AG04449 (cell line): ENCODE measurements at regions of chr12 and their contacts with region 1.

Region 1: GRCh38 chr12:47686645-47687240 is 19.1 kb downstream of the RPAP3 start:
- DNase-seq: peak; percentile 7
- H3K4me3 ChIP-seq: no peak overlapping the region
- CTCF ChIP-seq: peak; percentile 63

Region 2: GRCh38 chr12:47307680-47308399 is 378.9 kb before region 1 on chr12:
- CTCF ChIA-PET with region 1: interaction called, 16 read pairs
- POLR2A ChIA-PET with region 1: no interaction called
- DNase-seq: no peak
- H3K4me3 ChIP-seq: no peak overlapping the region
- CTCF ChIP-seq: peak; percentile 54

Region 3: DNA sequence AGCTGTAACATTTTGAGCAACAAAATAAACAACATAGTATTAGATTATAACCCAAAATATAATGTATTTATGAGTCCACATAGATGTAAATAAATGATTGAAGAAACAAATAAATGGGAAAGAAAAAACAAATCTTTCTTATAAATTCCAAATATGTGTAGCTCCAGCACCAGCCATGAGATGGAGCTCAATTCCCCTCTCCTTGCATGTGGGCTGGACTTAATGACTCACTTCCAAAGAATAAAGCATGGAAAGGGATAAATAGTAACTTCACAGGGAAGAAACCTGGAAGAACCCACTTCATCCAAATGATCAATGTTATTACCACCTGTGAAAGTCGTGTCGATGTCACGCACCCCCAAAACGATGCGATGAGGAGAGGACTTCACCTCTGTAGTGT is 139.7 kb before region 1 on chr12:
- CTCF ChIA-PET with region 1: interaction called, 10 read pairs
- POLR2A ChIA-PET with region 1: no interaction called
- DNase-seq: peak; percentile 9
- H3K4me3 ChIP-seq: no peak overlapping the region
- CTCF ChIP-seq: peak; percentile 49

Region 4: DNA sequence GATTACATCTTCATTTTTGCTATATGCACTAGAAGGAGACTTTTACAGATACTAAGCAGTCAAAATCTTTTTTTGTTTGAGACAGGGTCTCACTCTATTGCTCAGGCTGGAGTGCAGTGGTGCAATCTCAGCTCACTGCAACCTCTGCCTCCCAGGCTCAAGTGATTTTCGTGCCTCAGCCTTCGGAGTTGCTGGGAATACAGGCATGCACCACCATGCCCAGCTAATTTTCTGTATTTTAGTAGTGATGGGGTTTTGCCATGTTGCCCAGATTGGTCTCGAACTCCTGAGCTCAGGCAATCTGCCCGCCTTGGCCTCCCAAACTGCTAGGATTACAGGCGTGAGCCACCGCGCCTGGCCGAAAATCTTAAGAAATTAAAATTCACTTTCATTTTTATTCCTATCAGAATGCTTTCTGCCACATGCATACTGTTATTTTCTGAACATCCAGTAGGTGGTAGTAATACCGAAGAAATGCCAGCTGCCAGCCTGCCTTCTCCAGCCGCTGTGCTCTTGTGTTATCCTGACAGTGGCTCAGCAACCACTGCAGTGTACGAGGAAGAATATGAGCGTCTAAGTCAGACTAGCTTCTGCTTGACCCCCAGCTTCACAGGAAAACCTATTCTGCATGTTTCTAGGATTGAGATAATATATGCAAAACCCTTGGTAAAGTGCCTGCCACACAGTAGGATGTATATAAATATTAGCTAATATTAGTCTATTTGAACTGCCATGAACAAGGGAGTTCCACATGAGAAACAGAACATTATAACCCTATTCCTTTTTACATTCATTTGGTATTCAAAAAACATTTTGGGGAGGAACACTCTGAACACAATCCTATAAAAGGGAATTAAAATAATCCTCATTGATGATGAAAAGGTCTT is 35.1 kb before region 1 on chr12:
- CTCF ChIA-PET with region 1: interaction called, 35 read pairs
- POLR2A ChIA-PET with region 1: no interaction called
- DNase-seq: peak; percentile 4
- H3K4me3 ChIP-seq: no peak overlapping the region
- CTCF ChIP-seq: peak; percentile 44

Region 5: GRCh38 chr12:47672068-47672467 is 14.7 kb before region 1 on chr12:
- CTCF ChIA-PET with region 1: interaction called, 12 read pairs
- POLR2A ChIA-PET with region 1: no interaction called
- DNase-seq: no peak
- H3K4me3 ChIP-seq: no peak overlapping the region
- CTCF ChIP-seq: no peak

Region 6: GRCh38 chr12:47705566-47706425 is 19.1 kb after region 1 on chr12 and contains the start of gene RPAP3:
- CTCF ChIA-PET with region 1: interaction called, 11 read pairs
- POLR2A ChIA-PET with region 1: no interaction called
- DNase-seq: no peak
- H3K4me3 ChIP-seq: peak within 1 kb of the TSS; percentile 86
- CTCF ChIP-seq: peak; percentile 81